Panc1 (cell line): ENCODE measurements at regions of chr1 and their contacts with region 1.

Region 1: DNA sequence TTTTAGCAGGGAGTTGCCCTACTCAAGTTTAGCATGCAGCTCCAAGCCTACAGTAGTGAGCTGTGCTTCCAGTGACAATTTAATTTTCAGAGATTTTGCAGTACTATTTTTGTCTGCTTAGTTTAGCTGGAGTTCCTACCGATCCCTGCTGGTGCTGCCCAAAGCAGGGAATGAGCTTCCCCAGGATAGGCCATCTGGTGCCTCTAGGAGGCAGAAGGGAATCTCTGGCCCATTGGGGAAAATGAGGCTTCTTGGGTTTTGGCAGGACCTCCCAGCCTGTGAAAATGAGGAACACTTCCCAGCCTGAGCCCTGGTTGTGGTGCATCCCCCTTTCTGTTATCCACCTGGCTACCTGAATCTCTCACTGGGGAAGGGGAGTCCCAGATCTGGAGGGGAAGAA is 149.2 kb downstream of the RASAL2 start:
- DNase-seq: no peak
- ATAC-seq: no peak
- H3K4me3 ChIP-seq: no peak overlapping the region
- H3K27ac ChIP-seq: peak overlapping the region; percentile 48; the same call in 1 of the 2 replicates
- H3K4me1 ChIP-seq: peaks cover 41% of the 10 kb centered on the region
- H3K27me3 ChIP-seq: no peaks in the 10 kb centered on the region
- CTCF ChIP-seq: no peak

Region 2: GRCh38 chr1:177505905-177506590 is 737.1 kb before region 1 on chr1:
- CTCF ChIA-PET with region 1: no interaction called
- POLR2A ChIA-PET with region 1: interaction called, 12 read pairs
- in situ Hi-C with region 1: no loop called
- intact Hi-C with region 1: no loop called
- DNase-seq: no peak
- ATAC-seq: no peak
- H3K4me3 ChIP-seq: no peak overlapping the region
- H3K27ac ChIP-seq: no peak overlapping the region
- H3K4me1 ChIP-seq: no peaks in the 10 kb centered on the region
- H3K27me3 ChIP-seq: no peaks in the 10 kb centered on the region
- CTCF ChIP-seq: no peak

Region 3: DNA sequence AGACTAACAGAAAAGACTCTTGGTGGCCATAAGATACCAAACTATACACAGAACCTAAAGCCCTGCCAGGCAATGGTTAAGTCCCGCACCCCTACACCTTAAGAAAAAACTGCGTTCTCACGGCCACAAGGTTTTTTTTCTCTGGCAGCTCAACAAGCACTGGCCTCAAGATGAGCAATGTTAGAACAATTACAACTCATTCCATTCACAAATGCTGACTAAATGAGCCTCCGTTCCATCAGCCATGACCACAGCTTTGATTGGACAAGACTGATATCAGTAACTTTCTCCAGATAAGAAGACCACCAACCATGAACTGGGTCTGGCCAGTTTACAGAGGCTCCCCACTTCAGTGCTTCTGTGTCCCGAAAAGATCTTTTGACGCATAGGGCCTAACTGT is 305.2 kb before region 1 on chr1:
- CTCF ChIA-PET with region 1: no interaction called
- POLR2A ChIA-PET with region 1: no interaction called
- in situ Hi-C with region 1: no loop called
- intact Hi-C with region 1: no loop called
- DNase-seq: no peak
- ATAC-seq: no peak
- H3K4me3 ChIP-seq: no peak overlapping the region
- H3K27ac ChIP-seq: no peak overlapping the region
- H3K4me1 ChIP-seq: no peaks in the 10 kb centered on the region
- H3K27me3 ChIP-seq: no peaks in the 10 kb centered on the region
- CTCF ChIP-seq: no peak

Region 4: DNA sequence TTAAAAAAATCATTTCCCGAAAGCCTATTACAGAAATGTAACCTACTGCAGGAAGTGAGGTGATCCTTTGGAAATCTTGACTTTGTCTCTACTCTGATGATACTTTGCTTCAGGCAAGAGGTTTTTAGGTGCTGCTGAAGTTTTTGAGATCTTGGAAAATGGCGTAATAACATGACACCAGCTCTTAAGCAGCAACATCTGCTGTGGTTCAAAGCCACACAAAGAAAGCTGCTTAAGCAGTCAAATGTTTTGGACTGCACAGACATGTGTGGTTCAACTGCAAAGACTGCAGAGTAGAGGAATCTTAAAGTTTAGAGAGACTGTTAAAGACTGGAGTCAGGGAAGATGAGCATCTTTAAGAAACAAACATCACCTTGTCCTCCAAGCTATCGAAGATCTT is 10.2 kb before region 1 on chr1:
- CTCF ChIA-PET with region 1: no interaction called
- POLR2A ChIA-PET with region 1: no interaction called
- in situ Hi-C with region 1: no loop called
- intact Hi-C with region 1: no loop called
- DNase-seq: no peak
- ATAC-seq: no peak; the same call in 1 of the 2 replicates
- H3K4me3 ChIP-seq: no peak overlapping the region
- H3K27ac ChIP-seq: peak overlapping the region; percentile 54
- H3K4me1 ChIP-seq: peaks cover 9% of the 10 kb centered on the region
- H3K27me3 ChIP-seq: no peaks in the 10 kb centered on the region
- CTCF ChIP-seq: no peak